ENCODE measurements at regions of chr17 and their contacts with region 1.

Region 1: DNA sequence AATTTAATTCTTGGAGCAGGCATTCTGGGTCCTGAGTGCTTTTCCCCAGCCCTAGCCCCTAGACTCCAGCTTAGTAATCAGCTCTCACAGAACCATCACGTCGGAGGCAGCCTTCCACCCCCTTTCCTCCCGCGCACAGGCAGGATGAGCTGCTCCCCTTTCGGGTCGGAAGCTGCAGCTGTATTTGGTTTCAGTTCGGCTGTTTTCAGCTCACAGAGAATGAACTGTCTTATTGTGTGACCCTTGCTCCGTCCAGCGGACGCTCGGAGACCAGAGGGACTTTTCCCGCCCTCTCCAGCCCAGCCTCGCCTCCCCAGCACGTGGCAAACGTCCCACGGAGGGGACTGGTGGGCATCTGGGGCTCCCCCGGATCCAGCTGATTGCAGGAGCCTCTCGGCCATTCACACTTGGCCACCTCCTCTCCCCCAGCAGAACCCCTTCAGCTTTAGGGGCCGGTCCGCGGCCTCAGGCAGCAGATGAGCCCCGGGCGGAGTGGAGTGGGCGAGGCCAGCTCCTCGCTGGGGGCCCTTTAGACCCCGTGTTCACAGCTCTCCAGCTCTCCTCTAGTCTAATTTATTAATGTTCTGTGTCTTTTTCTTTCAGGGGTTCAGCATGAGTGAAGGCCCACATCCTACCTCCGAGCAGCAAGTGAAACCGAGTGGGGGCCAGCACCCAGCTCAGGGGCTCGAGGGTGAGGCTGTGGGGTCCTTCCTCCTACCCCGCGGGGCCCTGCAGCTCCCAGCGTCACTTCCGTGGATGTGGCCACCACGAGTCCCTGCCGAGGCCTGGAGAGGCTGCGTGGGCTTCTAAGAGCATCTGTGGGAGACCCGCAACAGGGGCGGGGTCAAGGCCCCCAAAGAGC is 863 bp upstream of the UTS2R start:
- DNase-seq: peak in 1 of 2 donors; percentile 29
- ATAC-seq: peak; percentile 23

Region 2: DNA sequence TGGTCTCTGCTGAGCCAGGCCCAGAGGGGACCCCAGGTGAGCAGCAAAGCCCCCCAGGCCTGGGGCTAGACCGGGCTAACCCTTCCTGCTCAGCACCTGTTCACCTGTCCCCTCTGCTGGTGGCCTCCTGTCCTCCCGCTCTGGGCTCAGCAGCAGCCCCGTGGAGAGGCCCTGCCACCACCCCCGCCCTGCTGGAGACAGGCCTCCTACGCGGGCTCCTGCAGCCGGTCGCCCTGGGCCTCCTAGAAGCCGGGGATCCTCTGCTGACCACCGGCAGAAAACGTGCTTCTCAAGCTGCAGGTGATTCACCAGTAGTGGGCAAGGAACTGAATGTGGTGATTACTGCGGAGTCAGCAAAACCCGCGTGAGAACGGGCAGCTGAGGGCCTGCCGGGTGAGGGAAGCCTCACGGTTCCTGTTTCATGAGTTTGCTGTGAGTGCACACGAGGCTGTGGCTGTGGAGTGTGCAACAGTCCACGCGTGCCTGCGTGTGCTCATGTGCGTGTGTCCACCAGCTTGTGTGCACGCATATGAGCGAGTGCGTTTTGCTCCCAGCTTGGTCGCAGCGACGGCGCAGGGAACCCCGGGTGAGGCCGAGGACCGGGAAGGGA is 37.9 kb before region 1 on chr17:
- intact Hi-C with region 1: no loop called
- DNase-seq: peak in 1 of 2 donors; percentile 62
- ATAC-seq: peak; percentile 8

Region 3: GRCh38 chr17:82623707-82624106 is 253.0 kb after region 1 on chr17:
- intact Hi-C with region 1: loop called in 1 of 2 experiments (anchors 5 kb)
- DNase-seq: no peak
- ATAC-seq: no peak